AG04449 (cell line): ENCODE measurements at regions of chr3 and their contacts with region 1.

Region 1: DNA sequence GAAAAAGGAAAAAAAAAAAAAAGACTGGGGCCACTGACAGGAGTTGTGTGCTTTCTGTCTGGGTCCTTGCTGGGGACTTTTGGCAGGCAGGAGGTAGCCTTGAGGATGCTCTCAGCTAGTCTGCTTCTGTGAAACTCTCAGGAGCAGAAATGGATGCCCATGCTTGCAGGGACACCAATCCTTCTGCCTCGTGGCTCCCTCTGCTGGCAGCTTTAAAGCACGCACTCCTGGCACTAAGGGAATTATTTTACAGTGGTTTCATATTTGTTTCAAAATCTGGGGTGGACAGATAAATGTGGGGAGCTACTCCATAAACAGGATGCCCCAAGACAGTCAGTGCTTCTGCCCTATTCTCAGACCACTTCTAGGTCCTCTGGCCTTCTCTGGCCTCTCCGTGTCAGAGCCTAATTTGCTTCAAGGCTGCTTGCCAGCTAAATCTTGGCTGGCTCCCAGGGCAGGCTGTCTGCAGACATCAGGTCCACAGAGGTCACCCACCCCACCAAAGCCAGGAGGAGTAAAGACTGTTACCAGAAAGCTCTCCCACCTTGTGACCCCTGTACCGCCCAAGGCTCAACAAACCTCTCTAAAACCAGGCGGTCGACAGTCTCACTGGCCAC is 17.1 kb downstream of the TRAIP start:
- DNase-seq: peak; percentile 19
- H3K4me3 ChIP-seq: no peak overlapping the region
- CTCF ChIP-seq: peak; percentile 83

Region 2: DNA sequence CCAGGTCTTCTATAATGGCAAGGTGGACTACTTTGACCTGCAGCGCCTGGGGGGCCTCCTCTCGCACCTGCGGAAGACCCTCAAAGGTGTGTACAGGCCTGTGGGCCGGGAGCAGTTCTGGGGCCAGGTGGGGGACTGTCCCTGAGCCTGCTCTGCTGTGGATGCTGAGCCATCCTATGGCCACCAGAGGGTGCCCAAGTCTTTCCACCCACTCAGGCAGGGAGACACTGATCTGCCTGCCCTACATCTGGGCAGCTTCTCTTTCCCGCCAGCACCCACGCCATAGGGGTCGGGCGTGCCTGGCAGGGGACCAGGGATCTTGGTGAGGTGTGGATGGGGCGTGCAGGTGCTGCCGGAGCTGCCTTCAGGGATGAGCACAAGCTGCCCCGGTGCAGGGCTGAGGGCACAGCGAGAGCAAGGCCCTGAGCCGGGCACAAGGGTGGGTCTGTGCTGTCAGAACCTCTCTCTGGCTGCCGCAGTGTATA is 135.8 kb before region 1 on chr3:
- CTCF ChIA-PET with region 1: interaction called, 74 read pairs
- POLR2A ChIA-PET with region 1: no interaction called
- DNase-seq: no peak
- H3K4me3 ChIP-seq: no peak overlapping the region
- CTCF ChIP-seq: peak; percentile 90

Region 3: GRCh38 chr3:49719214-49719884 is 120.0 kb before region 1 on chr3 and contains the start of gene AMIGO3:
- CTCF ChIA-PET with region 1: interaction called, 21 read pairs
- POLR2A ChIA-PET with region 1: no interaction called
- DNase-seq: peak; percentile 42
- H3K4me3 ChIP-seq: peak within 1 kb of the TSS; percentile 62
- CTCF ChIP-seq: peak; percentile 82

Region 4: GRCh38 chr3:49802719-49803464 is 36.4 kb before region 1 on chr3 and contains the start of gene INKA1:
- CTCF ChIA-PET with region 1: interaction called, 507 read pairs
- POLR2A ChIA-PET with region 1: interaction called, 5 read pairs
- DNase-seq: no peak
- H3K4me3 ChIP-seq: peak within 1 kb of the TSS; percentile 87
- CTCF ChIP-seq: peak; percentile 96

Region 5: GRCh38 chr3:49826016-49826415 is 13.3 kb before region 1 on chr3:
- CTCF ChIA-PET with region 1: interaction called, 107 read pairs
- POLR2A ChIA-PET with region 1: interaction called, 3 read pairs
- DNase-seq: no peak
- H3K4me3 ChIP-seq: no peak overlapping the region
- CTCF ChIP-seq: no peak

Region 6: GRCh38 chr3:49906004-49906743 is 66.9 kb after region 1 on chr3:
- CTCF ChIA-PET with region 1: interaction called, 18 read pairs
- POLR2A ChIA-PET with region 1: no interaction called
- DNase-seq: no peak
- H3K4me3 ChIP-seq: peak overlapping the region; percentile 21
- CTCF ChIP-seq: peak; percentile 80

Region 7: DNA sequence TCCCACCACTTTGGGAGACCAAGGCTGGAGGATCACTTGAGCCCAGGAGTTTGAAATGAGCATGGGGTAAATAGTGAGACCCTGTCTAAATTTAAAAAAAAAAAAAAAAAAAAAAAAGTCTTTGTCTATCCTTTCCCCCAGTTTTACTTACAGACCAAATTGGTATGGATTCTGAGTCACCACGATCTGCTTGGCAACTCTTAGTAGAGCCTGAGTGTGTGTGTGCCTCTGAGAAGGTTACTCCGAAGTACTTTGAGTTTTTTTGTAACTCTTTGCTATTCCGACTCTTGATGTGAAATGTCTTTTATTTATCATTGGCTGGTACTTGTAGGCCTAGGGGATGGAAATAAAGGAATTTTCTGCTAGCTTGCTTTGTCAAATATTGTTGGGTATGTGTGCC is 163.9 kb after region 1 on chr3:
- CTCF ChIA-PET with region 1: no interaction called
- POLR2A ChIA-PET with region 1: no interaction called
- DNase-seq: no peak
- H3K4me3 ChIP-seq: no peak overlapping the region
- CTCF ChIP-seq: no peak